SK-N-SH (cell line): ENCODE measurements at regions of chr17 and their contacts with region 1.

Region 1: DNA sequence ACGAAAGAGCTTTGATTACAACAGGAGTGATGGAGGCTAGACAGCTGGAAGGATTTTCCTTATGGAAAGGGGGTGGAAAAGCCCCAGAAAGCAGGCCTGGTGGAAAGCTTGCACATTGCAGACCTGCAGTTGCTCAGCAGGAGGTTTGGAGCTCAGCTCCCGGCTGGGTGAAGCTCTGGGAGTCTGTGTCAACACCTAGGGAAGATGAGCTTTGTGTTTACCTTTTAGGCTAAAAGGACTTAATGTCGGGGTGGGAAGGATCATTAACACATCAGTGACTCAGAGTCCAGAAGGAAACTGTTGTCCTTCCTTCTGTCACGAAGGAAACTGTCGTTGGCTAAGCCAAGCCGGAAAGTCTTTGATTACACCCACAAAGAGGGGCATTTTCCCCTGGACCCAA is 48.2 kb downstream of the RAP1GAP2 start:
- DNase-seq: no peak
- H3K4me3 ChIP-seq: no peak overlapping the region
- H3K27ac ChIP-seq: no peak overlapping the region
- H3K4me1 ChIP-seq: peaks cover 6 to 7% of the 10 kb centered on the region in 2 experiments; a peak in 2 of 4 replicates
- H3K27me3 ChIP-seq: no peaks in the 10 kb centered on the region
- CTCF ChIP-seq: no peak
- EP300 ChIP-seq: no peak
- RAD21 ChIP-seq: no peak

Region 2: DNA sequence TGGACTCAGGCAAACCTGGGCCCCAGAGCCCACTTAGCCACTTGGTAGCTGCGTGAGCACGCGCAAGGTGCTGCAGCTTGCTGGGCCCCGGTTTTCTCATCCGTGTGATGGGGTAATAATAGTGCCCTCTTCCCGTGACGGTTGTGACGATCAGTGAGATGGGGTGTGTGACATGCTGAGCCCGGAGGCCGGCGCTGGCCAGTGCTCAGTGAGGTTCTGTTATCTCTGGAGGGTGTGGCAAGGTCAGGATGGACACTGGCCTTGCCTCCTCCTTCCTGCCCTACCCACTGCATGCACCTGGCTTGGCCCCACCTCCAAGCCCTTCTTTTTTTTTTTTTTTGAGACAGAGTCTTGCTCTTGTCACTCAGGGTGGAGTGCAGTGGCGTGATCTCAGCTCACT is 34.4 kb after region 1 on chr17:
- CTCF ChIA-PET with region 1: interaction called, 11 read pairs
- POLR2A ChIA-PET with region 1: no interaction called
- DNase-seq: no peak
- H3K4me3 ChIP-seq: no peak overlapping the region
- H3K27ac ChIP-seq: no peak overlapping the region
- H3K4me1 ChIP-seq: peaks cover 4 to 12% of the 10 kb centered on the region in 2 experiments; a peak in 1 of 4 replicates
- H3K27me3 ChIP-seq: no peaks in the 10 kb centered on the region
- CTCF ChIP-seq: no peak
- EP300 ChIP-seq: no peak
- RAD21 ChIP-seq: no peak

Region 3: GRCh38 chr17:2909175-2909845 is 64.9 kb after region 1 on chr17:
- CTCF ChIA-PET with region 1: interaction called, 59 read pairs
- POLR2A ChIA-PET with region 1: interaction called, 5 read pairs
- DNase-seq: peak; percentile 69
- H3K4me3 ChIP-seq: no peak overlapping the region
- H3K27ac ChIP-seq: peak overlapping the region in 1 of 2 experiments; percentile 91; a peak in 2 of 4 replicates
- H3K4me1 ChIP-seq: peaks cover 0 to 74% of the 10 kb centered on the region in 2 experiments; a peak in 1 of 4 replicates
- H3K27me3 ChIP-seq: no peaks in the 10 kb centered on the region
- CTCF ChIP-seq: no peak
- EP300 ChIP-seq: peak in 1 of 2 experiments; percentile 21; a peak in 1 of 4 replicates
- RAD21 ChIP-seq: peak; percentile 39

Region 4: GRCh38 chr17:2940352-2940751 is 95.9 kb after region 1 on chr17:
- CTCF ChIA-PET with region 1: interaction called, 135 read pairs
- POLR2A ChIA-PET with region 1: no interaction called
- DNase-seq: no peak
- H3K4me3 ChIP-seq: no peak overlapping the region
- H3K27ac ChIP-seq: no peak overlapping the region; a peak in 1 of 4 replicates
- H3K4me1 ChIP-seq: peaks cover 0 to 27% of the 10 kb centered on the region in 2 experiments; a peak in 1 of 4 replicates
- H3K27me3 ChIP-seq: no peaks in the 10 kb centered on the region
- CTCF ChIP-seq: no peak
- EP300 ChIP-seq: no peak
- RAD21 ChIP-seq: no peak

Region 5: GRCh38 chr17:2982854-2983253 is 138.4 kb after region 1 on chr17:
- CTCF ChIA-PET with region 1: interaction called, 12 read pairs
- POLR2A ChIA-PET with region 1: no interaction called
- DNase-seq: no peak
- H3K4me3 ChIP-seq: no peak overlapping the region
- H3K27ac ChIP-seq: peak overlapping the region; percentile 43 to 52; a peak in 2 of 4 replicates
- H3K4me1 ChIP-seq: peaks cover 4 to 13% of the 10 kb centered on the region in 2 experiments; a peak in 1 of 4 replicates
- H3K27me3 ChIP-seq: no peaks in the 10 kb centered on the region
- CTCF ChIP-seq: peak; percentile 60
- EP300 ChIP-seq: peak in 1 of 2 experiments; percentile 66; a peak in 1 of 4 replicates
- RAD21 ChIP-seq: peak; percentile 48

Region 6: GRCh38 chr17:3039736-3040135 is 195.3 kb after region 1 on chr17:
- CTCF ChIA-PET with region 1: interaction called, 10 read pairs
- POLR2A ChIA-PET with region 1: no interaction called
- DNase-seq: no peak
- H3K4me3 ChIP-seq: no peak overlapping the region
- H3K27ac ChIP-seq: no peak overlapping the region
- H3K4me1 ChIP-seq: no peaks in the 10 kb centered on the region
- H3K27me3 ChIP-seq: no peaks in the 10 kb centered on the region
- CTCF ChIP-seq: no peak
- EP300 ChIP-seq: no peak
- RAD21 ChIP-seq: no peak